ENCODE measurements at regions of chr2 and their contacts with region 1.

Region 1: DNA sequence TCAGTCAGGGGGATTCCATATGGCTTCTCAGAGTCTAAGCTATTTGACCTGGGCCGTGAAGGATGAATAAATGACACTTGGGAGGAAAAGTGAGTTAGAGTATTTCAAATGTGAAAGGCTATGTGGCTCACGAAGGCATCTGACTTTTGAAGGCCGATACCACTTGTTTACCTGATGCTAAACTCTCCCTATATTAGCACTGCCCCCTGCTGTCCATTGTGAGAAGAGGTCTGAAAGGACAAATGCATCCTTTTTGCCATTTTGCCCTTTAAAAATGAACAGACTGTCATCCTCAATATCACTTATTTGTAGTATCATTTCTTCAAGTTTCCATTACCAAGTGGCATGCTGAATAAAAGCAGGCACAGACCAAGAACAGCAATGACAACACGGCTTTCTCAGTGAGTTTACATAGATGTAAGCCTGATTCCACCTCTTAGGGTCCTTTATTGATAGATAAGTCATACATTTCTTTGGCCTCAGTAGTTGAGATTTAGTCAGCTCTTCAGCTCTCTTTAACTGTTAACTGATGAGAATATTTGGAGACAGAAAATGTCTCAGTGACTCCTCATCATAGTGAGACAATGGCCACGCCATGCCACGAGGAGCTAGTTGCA is 40.1 kb downstream of the DOCK10 start:
- DNase-seq: peak; percentile 88
- H3K4me3 Mint-ChIP-seq: no peak overlapping the region
- H3K27ac Mint-ChIP-seq: no peak overlapping the region
- H3K4me1 Mint-ChIP-seq: peaks cover 11% of the 10 kb centered on the region
- H3K27me3 Mint-ChIP-seq: no peaks in the 10 kb centered on the region
- CTCF ChIP-seq: peak; percentile 87

Region 2: DNA sequence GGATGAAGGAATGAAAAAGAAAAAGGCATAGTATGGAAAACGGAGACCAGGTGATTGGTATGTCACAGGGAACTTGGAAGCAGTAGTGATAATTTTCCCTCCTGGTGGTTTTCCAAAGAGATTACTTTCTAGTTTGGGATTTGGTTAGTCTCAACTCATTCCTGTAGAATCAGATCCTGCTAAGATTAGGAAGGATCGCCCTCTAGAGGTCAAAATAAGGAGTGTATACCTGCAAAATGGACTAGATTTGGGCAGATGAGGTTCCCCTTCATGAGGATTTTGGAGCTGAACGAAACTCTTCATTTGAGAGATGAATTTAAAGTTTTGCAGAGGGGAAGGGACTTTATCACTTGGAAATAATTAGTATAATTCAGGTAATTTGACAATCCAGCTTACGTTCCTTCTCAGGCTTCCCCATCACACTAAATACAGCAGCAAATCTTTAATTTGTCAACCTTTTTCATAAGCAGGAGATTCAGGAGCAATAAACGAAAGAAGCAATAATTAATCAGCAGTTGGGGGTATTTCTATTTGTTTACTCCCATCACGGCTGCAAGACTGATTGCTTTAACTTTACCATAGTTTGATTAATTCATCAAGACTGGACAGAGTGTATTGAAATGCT is 351.2 kb before region 1 on chr2:
- CTCF ChIA-PET with region 1: interaction called, 8 read pairs
- POLR2A ChIA-PET with region 1: no interaction called
- intact Hi-C with region 1: loop called (anchors 2 kb)
- DNase-seq: peak; percentile 70
- H3K4me3 Mint-ChIP-seq: no peak overlapping the region
- H3K27ac Mint-ChIP-seq: no peak overlapping the region
- H3K4me1 Mint-ChIP-seq: peaks cover 8% of the 10 kb centered on the region
- H3K27me3 Mint-ChIP-seq: peaks cover 9% of the 10 kb centered on the region
- CTCF ChIP-seq: peak; percentile 64

Region 3: DNA sequence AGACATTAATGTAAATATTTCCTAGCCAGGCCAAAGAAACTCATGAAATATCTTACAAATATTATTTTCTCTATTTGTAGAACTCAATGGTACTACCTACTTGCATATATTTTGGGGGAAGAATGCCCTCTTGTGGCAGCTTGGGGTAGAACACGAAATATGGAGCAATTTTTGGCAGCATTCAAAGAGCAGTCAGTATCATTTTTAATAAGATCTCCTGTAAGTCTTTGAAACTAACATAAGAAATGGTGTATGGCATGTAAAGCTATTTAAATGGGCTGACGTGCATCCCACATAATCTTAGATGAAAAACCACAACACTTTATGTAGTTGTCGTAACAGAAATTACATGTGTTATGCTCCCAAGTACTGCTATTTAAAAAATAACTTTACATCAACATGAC is 223.7 kb before region 1 on chr2:
- CTCF ChIA-PET with region 1: interaction called, 9 read pairs
- POLR2A ChIA-PET with region 1: interaction called, 5 read pairs
- intact Hi-C with region 1: loop called (anchors 1 kb)
- DNase-seq: peak; percentile 75
- H3K4me3 Mint-ChIP-seq: no peak overlapping the region
- H3K27ac Mint-ChIP-seq: no peak overlapping the region
- H3K4me1 Mint-ChIP-seq: peaks cover 4% of the 10 kb centered on the region
- H3K27me3 Mint-ChIP-seq: no peaks in the 10 kb centered on the region
- CTCF ChIP-seq: peak; percentile 50

Region 4: DNA sequence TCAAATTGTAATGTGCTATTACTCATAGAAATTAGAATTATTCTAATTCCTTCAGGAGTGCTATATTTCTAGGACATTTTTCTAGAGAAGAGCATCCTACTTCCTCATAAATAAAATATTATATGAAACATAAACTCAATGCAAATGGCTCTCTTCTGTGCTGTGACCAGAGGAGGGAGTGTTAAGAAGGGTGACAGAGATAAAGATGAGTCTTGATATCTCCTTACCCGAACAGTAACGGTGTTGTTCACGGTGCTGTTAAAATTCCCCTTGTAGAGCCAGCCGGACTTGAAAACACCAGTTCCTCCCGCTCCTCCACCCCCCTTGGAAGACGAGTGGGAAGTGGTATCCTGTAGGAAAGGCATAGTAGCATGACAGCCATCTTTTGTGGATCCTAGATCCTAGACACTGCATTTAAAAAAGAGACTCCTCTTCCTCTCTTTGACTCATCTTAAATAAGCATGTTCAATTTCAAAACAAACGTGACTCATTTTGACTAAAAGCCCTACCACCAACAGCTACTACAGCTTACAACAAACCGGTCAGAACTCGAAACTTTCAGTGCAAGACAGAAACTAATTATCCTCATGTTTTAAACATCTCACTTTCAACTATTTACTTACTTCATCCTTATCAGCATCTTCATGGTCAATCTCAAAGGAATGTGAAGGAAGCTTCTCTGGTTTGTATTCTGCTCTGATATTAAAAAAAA is 116.2 kb before region 1 on chr2:
- CTCF ChIA-PET with region 1: interaction called, 5 read pairs
- POLR2A ChIA-PET with region 1: interaction called, 4 read pairs
- intact Hi-C with region 1: loop called (anchors 2 kb)
- DNase-seq: peak; percentile 86
- H3K4me3 Mint-ChIP-seq: peak overlapping the region; percentile 26
- H3K27ac Mint-ChIP-seq: peak overlapping the region; percentile 84
- H3K4me1 Mint-ChIP-seq: peaks cover 48% of the 10 kb centered on the region
- H3K27me3 Mint-ChIP-seq: no peaks in the 10 kb centered on the region
- CTCF ChIP-seq: no peak

Region 5: GRCh38 chr2:225660262-225661131 is 658.4 kb after region 1 on chr2:
- CTCF ChIA-PET with region 1: interaction called, 4 read pairs
- POLR2A ChIA-PET with region 1: no interaction called
- intact Hi-C with region 1: loop called (anchors 1 kb)
- DNase-seq: peak; percentile 77
- H3K4me3 Mint-ChIP-seq: no peak overlapping the region
- H3K27ac Mint-ChIP-seq: no peak overlapping the region
- H3K4me1 Mint-ChIP-seq: no peaks in the 10 kb centered on the region
- H3K27me3 Mint-ChIP-seq: peaks cover 21% of the 10 kb centered on the region
- CTCF ChIP-seq: peak; percentile 77